CD4-positive, alpha-beta T cell (primary cell): ENCODE measurements at regions of chr6 and their contacts with region 1.

Region 1: GRCh38 chr6:42771741-42772100 is 10.1 kb upstream of the BICRAL start:
- DNase-seq: peak in 8 of 14 experiments; percentile 20 to 84 (median 41)
- ATAC-seq: peak; percentile 27
- H3K4me3 ChIP-seq: peak overlapping the region; percentile 19
- H3K4me3 Mint-ChIP-seq: peak overlapping the region; percentile 76
- H3K27ac ChIP-seq: peak overlapping the region; percentile 92 to 94
- H3K27ac Mint-ChIP-seq: peak overlapping the region; percentile 99
- H3K4me1 ChIP-seq: peaks cover 75% of the 10 kb centered on the region
- H3K4me1 Mint-ChIP-seq: peaks cover 75% of the 10 kb centered on the region
- H3K27me3 ChIP-seq: no peaks in the 10 kb centered on the region
- H3K27me3 Mint-ChIP-seq: no peaks in the 10 kb centered on the region
- CTCF ChIP-seq: no peak

Region 2: GRCh38 chr6:42661540-42662153 is 110.1 kb before region 1 on chr6:
- CTCF ChIA-PET with region 1: interaction called, 5 read pairs
- POLR2A ChIA-PET with region 1: interaction called, 10 read pairs
- intact Hi-C with region 1: loop called in 1 of 2 experiments (anchors 5 kb)
- DNase-seq: peak; percentile 75 to 91 (median 85)
- ATAC-seq: peak; percentile 100
- H3K4me3 ChIP-seq: no peak overlapping the region
- H3K4me3 Mint-ChIP-seq: no peak overlapping the region
- H3K27ac ChIP-seq: no peak overlapping the region
- H3K27ac Mint-ChIP-seq: no peak overlapping the region
- H3K4me1 ChIP-seq: no peaks in the 10 kb centered on the region
- H3K4me1 Mint-ChIP-seq: no peaks in the 10 kb centered on the region
- H3K27me3 ChIP-seq: no peaks in the 10 kb centered on the region
- H3K27me3 Mint-ChIP-seq: no peaks in the 10 kb centered on the region
- CTCF ChIP-seq: peak; percentile 90

Region 3: GRCh38 chr6:42756722-42757121 is 15.0 kb before region 1 on chr6:
- CTCF ChIA-PET with region 1: interaction called, 5 read pairs
- POLR2A ChIA-PET with region 1: interaction called, 1,427 read pairs
- intact Hi-C with region 1: no loop called
- DNase-seq: no peak
- ATAC-seq: no peak
- H3K4me3 ChIP-seq: no peak overlapping the region
- H3K4me3 Mint-ChIP-seq: no peak overlapping the region
- H3K27ac ChIP-seq: no peak overlapping the region
- H3K27ac Mint-ChIP-seq: no peak overlapping the region
- H3K4me1 ChIP-seq: peaks cover 7% of the 10 kb centered on the region
- H3K4me1 Mint-ChIP-seq: peaks cover 57% of the 10 kb centered on the region
- H3K27me3 ChIP-seq: no peaks in the 10 kb centered on the region
- H3K27me3 Mint-ChIP-seq: no peaks in the 10 kb centered on the region
- CTCF ChIP-seq: no peak

Region 4: DNA sequence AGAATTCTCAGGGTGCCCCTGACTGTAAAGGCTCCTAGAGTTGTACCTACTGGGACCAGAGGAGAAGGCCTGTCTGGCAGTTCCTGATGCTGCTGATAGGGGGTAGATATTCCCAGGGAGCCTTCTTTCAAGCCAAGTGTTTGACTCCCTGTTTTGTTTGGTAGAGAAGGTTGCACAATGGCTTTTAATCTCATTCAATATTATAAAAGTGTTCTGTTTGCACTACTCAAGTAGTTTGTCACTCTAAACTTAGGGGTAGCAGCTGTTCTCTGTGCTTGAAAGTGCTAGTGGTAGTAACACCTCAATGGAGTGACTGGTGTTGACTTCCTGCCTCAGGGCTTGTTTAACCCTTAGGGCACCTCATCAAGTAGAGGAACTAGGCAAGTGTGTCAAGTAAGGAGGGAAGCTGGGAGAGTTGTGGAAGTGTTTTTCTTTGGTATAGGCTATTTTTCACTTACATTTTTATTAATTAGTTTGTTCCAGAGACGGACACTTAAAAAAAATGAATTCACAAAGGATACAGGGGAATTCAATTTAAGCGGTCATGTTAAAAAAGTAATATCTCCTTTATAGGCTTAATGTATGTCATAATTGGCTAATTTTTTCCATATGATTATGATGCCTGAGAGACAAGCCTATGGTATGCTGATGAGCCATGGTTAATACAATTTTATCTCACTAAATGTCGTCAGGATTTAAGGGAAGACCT is 48.2 kb after region 1 on chr6:
- CTCF ChIA-PET with region 1: interaction called, 9 read pairs
- POLR2A ChIA-PET with region 1: interaction called, 20 read pairs
- intact Hi-C with region 1: loop called in 1 of 2 experiments (anchors 5 kb)
- DNase-seq: peak in 5 of 14 experiments; percentile 1 to 51 (median 35)
- ATAC-seq: peak; percentile 78
- H3K4me3 ChIP-seq: no peak overlapping the region
- H3K4me3 Mint-ChIP-seq: no peak overlapping the region
- H3K27ac ChIP-seq: no peak overlapping the region
- H3K27ac Mint-ChIP-seq: peak overlapping the region; percentile 86
- H3K4me1 ChIP-seq: peaks cover 7% of the 10 kb centered on the region
- H3K4me1 Mint-ChIP-seq: peaks cover 39% of the 10 kb centered on the region
- H3K27me3 ChIP-seq: no peaks in the 10 kb centered on the region
- H3K27me3 Mint-ChIP-seq: no peaks in the 10 kb centered on the region
- CTCF ChIP-seq: no peak

Region 5: DNA sequence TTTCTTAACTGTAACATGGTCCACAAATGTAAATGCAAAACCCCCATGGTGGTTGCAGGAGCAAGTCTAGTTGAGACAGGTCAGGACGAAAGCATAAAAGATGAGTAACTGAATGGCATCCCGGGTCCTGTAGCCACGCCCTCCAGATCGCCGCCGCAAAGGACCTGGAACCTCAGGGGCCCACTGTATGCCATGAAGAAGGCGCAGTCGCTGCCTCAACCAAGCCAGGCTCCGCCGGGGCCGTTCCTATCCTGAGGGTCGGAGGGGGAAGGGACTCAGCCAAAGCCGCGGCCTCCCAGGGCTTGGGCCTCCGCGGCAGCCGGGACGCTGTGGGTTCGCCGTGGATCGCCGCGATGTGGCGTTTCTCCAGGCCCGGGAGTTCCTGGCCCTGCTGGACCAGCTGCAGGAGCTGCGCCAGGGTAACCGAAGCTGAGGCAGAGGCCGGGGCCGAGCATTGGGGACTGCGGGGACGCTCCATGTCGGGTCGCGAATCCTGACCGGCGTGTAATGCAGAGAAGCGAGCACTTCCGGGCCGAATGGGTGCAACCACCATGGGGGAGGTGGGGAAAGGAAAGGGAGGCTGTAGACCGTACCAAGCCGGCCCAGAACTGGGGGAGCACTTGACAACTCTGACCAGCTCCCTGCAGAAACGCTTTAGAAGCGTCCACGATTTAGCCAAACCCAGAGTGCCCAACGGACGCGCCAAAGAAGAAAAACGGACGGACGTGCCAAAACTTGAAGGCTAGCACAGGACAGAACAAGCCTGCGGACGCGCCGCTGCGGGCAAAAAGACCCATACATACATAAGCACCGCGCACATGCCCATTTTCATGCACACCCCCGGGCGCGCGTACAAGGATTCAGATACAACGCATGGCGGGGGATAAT is 118.8 kb after region 1 on chr6:
- CTCF ChIA-PET with region 1: interaction called, 4 read pairs
- POLR2A ChIA-PET with region 1: interaction called, 18 read pairs
- intact Hi-C with region 1: no loop called
- DNase-seq: peak; percentile 77 to 93 (median 87)
- ATAC-seq: peak; percentile 93
- H3K4me3 ChIP-seq: peak overlapping the region; percentile 94
- H3K4me3 Mint-ChIP-seq: peak overlapping the region; percentile 91
- H3K27ac ChIP-seq: peak overlapping the region; percentile 86 to 89
- H3K27ac Mint-ChIP-seq: peak overlapping the region; percentile 94
- H3K4me1 ChIP-seq: peaks cover 17% of the 10 kb centered on the region
- H3K4me1 Mint-ChIP-seq: peaks cover 16% of the 10 kb centered on the region
- H3K27me3 ChIP-seq: no peaks in the 10 kb centered on the region
- H3K27me3 Mint-ChIP-seq: no peaks in the 10 kb centered on the region
- CTCF ChIP-seq: no peak